Activated B cell treated with CpG ODN at 0.5 μM for 24 hours (primary cell): ENCODE measurements at regions of chr17 and their contacts with region 1.

Region 1: GRCh38 chr17:14926526-14927122 is 338.5 kb downstream of the PMP22 start:
- DNase-seq: no peak
- ATAC-seq: no peak
- H3K4me3 Mint-ChIP-seq: no peak overlapping the region
- H3K27ac Mint-ChIP-seq: no peak overlapping the region
- H3K4me1 Mint-ChIP-seq: no peaks in the 10 kb centered on the region
- H3K27me3 Mint-ChIP-seq: peaks cover 11% of the 10 kb centered on the region
- CTCF ChIP-seq: peak; percentile 76

Region 2: GRCh38 chr17:13337864-13338371 is 1588.7 kb before region 1 on chr17:
- CTCF ChIA-PET with region 1: interaction called, 14 read pairs
- POLR2A ChIA-PET with region 1: no interaction called
- intact Hi-C with region 1: no loop called
- DNase-seq: no peak
- ATAC-seq: no peak
- H3K4me3 Mint-ChIP-seq: no peak overlapping the region
- H3K27ac Mint-ChIP-seq: no peak overlapping the region
- H3K4me1 Mint-ChIP-seq: no peaks in the 10 kb centered on the region
- H3K27me3 Mint-ChIP-seq: no peaks in the 10 kb centered on the region
- CTCF ChIP-seq: no peak

Region 3: GRCh38 chr17:14211801-14212200 is 714.8 kb before region 1 on chr17:
- CTCF ChIA-PET with region 1: interaction called, 8 read pairs
- POLR2A ChIA-PET with region 1: no interaction called
- intact Hi-C with region 1: loop called (anchors 1 kb)
- DNase-seq: peak; percentile 21
- ATAC-seq: no peak
- H3K4me3 Mint-ChIP-seq: no peak overlapping the region
- H3K27ac Mint-ChIP-seq: no peak overlapping the region
- H3K4me1 Mint-ChIP-seq: no peaks in the 10 kb centered on the region
- H3K27me3 Mint-ChIP-seq: no peaks in the 10 kb centered on the region
- CTCF ChIP-seq: no peak

Region 4: DNA sequence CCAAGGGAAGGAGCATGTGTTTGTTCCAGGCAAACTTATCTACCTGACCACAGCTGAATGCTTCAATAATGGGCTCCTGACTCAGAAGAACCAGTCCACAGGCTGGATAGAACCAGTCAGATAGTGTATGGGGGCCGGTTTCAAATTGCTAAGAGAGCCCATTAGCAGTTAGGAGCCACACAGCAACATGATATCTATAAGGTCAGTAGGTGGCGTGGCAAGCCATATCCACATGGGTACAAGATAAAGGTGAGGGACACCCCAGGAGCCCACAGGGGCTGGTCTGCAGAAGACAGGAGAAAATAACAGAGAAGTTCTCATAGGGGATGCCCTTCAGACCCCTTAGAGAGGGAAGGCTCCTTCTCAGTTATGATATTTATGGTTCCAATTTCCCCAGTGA is 658.4 kb before region 1 on chr17:
- CTCF ChIA-PET with region 1: interaction called, 3 read pairs
- POLR2A ChIA-PET with region 1: no interaction called
- intact Hi-C with region 1: loop called (anchors 1 kb)
- DNase-seq: no peak
- ATAC-seq: no peak
- H3K4me3 Mint-ChIP-seq: no peak overlapping the region
- H3K27ac Mint-ChIP-seq: no peak overlapping the region
- H3K4me1 Mint-ChIP-seq: no peaks in the 10 kb centered on the region
- H3K27me3 Mint-ChIP-seq: peaks cover 12% of the 10 kb centered on the region
- CTCF ChIP-seq: no peak

Region 5: DNA sequence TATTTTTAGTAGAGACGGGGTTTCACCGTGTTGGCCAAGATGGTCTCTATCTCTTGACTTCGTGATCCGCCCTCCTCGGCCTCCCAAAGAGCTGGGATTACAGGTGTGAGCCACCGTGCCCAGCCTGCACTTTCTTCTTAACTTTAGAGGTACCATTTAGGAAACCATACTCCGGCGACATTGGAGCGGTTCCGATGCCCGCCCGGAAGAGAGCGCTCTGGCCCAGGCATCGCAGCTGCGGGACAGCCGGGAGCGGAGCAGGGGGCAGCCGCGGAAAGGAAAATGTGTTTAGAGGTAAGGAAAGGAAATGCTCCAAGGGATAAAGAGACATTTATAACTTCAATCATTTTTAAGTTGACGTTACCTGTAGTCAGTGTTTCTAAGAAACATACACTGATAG is 631.7 kb before region 1 on chr17:
- CTCF ChIA-PET with region 1: interaction called, 5 read pairs
- POLR2A ChIA-PET with region 1: no interaction called
- intact Hi-C with region 1: loop called (anchors 2 kb)
- DNase-seq: no peak
- ATAC-seq: no peak
- H3K4me3 Mint-ChIP-seq: no peak overlapping the region
- H3K27ac Mint-ChIP-seq: no peak overlapping the region
- H3K4me1 Mint-ChIP-seq: peaks cover 20% of the 10 kb centered on the region
- H3K27me3 Mint-ChIP-seq: peaks cover 69% of the 10 kb centered on the region
- CTCF ChIP-seq: no peak

Region 6: DNA sequence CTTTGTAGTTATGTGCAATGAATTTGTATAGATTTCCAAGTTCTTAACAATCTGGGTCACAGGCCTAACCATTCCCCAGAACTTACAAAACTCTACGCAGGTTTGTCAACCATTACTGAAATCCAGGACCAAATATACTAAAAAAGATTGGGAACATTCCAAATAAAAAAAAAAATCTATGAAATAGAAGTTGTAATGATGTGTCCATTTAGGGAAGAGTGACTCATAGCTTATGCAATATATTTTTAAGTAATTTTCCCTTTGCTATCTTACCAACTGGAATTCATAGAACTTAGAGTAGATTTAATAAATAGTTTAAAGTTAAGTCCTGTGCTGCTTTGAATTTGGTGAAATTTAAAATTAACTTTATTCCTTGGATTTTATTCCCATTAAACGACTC is 54.7 kb before region 1 on chr17:
- CTCF ChIA-PET with region 1: no interaction called
- POLR2A ChIA-PET with region 1: no interaction called
- intact Hi-C with region 1: no loop called
- DNase-seq: no peak
- ATAC-seq: no peak
- H3K4me3 Mint-ChIP-seq: no peak overlapping the region
- H3K27ac Mint-ChIP-seq: no peak overlapping the region
- H3K4me1 Mint-ChIP-seq: no peaks in the 10 kb centered on the region
- H3K27me3 Mint-ChIP-seq: peaks cover 3% of the 10 kb centered on the region
- CTCF ChIP-seq: no peak

Region 7: DNA sequence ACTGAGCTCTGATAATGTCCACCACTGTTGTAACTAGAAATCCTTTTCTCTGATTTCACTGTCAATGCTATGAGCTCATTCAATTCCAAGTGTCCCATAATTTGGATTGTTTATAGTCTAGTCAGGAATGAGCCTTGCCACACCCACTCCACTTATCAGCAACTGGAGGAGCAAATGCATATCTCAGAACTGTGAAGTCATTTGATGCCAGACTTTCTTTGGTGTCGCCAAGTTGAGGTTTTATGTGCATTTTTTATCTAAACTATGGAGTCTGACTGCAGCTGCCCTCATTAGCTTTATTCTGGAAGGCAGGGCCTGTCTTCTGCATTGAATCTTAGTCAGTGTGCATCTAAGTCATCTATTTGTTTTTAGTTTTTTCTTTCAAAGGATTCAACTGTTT is 22.8 kb before region 1 on chr17:
- CTCF ChIA-PET with region 1: no interaction called
- POLR2A ChIA-PET with region 1: no interaction called
- intact Hi-C with region 1: no loop called
- DNase-seq: no peak
- ATAC-seq: no peak
- H3K4me3 Mint-ChIP-seq: no peak overlapping the region
- H3K27ac Mint-ChIP-seq: no peak overlapping the region
- H3K4me1 Mint-ChIP-seq: no peaks in the 10 kb centered on the region
- H3K27me3 Mint-ChIP-seq: peaks cover 5% of the 10 kb centered on the region
- CTCF ChIP-seq: no peak

Region 8: GRCh38 chr17:15029469-15029868 is 102.8 kb after region 1 on chr17:
- CTCF ChIA-PET with region 1: no interaction called
- POLR2A ChIA-PET with region 1: no interaction called
- intact Hi-C with region 1: no loop called
- DNase-seq: no peak
- ATAC-seq: no peak
- H3K4me3 Mint-ChIP-seq: no peak overlapping the region
- H3K27ac Mint-ChIP-seq: no peak overlapping the region
- H3K4me1 Mint-ChIP-seq: no peaks in the 10 kb centered on the region
- H3K27me3 Mint-ChIP-seq: peaks cover 7% of the 10 kb centered on the region
- CTCF ChIP-seq: no peak

Region 9: DNA sequence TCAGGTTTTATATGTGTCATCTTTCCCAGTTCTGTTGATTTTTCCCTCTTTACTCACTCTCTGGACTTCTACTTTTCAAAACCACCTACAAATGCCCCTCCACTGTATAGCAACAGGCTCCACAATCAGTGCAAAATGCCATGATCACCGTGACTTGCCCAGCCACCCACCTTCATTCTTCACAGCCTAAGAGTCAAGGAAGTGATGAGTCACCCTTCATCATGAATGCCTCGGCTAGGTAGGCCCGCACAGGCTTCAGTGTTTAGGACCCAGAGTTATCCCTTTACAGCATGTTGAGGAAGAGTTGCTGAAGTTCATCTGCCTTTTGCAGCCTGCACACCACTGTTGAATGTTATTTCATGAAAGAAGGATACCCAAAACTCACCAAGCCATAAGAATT is 179.9 kb after region 1 on chr17:
- CTCF ChIA-PET with region 1: no interaction called
- POLR2A ChIA-PET with region 1: no interaction called
- intact Hi-C with region 1: no loop called
- DNase-seq: no peak
- ATAC-seq: no peak
- H3K4me3 Mint-ChIP-seq: no peak overlapping the region
- H3K27ac Mint-ChIP-seq: no peak overlapping the region
- H3K4me1 Mint-ChIP-seq: no peaks in the 10 kb centered on the region
- H3K27me3 Mint-ChIP-seq: no peaks in the 10 kb centered on the region
- CTCF ChIP-seq: no peak